Activated T-helper 2 cell treated with anti-CD3 and anti-CD28 coated beads, Interferon-gamma antibody, Interleukin-2, Interleukin-4, amounts not matched to agents 10 μg/mL and 5 μg/mL and 100 μg/mL, durations not matched to agents 14 hours and 24 hours and 36 hours (primary cell): ENCODE measurements at regions of chr3 and their contacts with region 1.

Region 1: GRCh38 chr3:43998836-43999727 is 242.6 kb upstream of the TOPAZ1 start:
- DNase-seq: no peak
- H3K4me3 Mint-ChIP-seq: no peak overlapping the region
- H3K27ac Mint-ChIP-seq: no peak overlapping the region
- H3K4me1 Mint-ChIP-seq: peaks cover 28% of the 10 kb centered on the region
- H3K27me3 Mint-ChIP-seq: peaks cover 75% of the 10 kb centered on the region

Region 2: DNA sequence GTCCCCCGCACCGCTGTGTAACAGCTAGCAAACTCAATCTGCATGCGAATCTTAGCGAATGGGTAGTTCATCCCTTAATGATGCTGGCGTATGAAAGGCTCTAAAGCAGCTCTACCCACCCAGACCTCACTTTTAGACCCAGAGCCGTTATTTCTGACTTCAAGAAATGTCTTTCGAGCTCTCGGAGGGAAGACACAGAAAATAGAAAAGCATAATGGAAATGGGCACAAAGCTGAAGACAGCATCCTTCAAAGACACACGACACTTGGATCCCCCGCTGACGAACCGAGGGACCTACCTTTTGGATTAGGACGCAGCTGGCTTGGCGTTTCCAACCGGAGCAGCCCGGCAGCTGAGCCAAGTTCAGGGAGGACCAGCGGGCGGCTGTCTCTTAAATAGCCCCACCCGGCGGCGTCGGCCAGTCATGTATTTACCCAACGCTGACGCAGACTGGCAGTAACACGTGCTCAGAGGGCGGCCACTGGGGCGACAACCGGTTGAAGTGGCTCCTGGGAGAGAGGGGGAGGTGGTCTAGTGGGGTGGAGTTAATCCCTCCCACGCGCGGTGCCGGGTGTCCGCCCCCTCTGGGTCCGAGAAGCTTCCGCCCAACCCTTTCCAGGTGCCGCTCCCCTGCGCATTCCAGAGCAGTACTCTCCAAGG is 1734.6 kb before region 1 on chr3:
- intact Hi-C with region 1: loop called (anchors 10 kb)
- DNase-seq: no peak
- H3K4me3 Mint-ChIP-seq: no peak overlapping the region
- H3K27ac Mint-ChIP-seq: no peak overlapping the region
- H3K4me1 Mint-ChIP-seq: peaks cover 1% of the 10 kb centered on the region
- H3K27me3 Mint-ChIP-seq: peaks cover 67% of the 10 kb centered on the region

Region 3: DNA sequence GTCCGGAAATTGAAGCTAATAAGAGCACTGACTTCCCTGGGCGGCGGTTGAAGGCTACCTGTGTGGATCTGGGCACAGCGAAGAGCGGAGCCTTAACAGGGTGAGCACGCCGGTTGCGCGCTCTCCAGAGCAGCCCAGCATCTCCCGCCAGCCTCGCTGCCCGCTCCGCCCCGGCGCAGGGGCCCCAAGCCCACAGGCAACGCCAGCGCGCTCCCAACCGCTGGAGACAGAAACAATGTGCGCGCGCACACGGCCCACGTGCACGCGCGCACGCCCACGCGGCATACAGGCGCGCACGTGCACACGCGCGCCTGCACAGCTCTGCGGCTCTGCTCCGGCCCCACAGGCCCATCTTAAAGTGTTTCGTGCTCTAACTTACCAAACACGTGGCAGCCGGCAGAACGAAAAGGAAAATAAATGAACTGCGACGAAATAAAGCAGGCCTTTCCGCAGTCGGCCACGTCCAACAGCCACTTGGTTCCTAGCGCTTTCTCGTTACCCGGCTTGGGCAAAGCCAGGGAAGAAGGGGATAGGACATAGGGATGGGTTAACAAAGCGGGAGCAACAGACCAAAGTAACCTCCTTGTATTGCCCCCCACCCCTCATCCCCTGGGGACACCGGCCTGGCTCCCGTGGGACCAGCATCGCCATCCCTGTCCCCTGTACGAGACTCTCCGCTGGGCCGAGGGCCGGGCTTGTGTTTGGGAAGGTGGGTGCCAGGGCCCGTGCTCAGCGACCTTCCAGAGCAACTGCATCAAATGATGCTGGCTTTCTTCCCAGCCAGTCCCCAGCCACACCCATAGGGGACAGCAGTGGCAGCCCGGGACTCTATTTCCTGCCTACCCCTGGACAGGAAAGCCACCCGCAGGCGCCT is 104.7 kb before region 1 on chr3:
- intact Hi-C with region 1: loop called (anchors 5 kb)
- DNase-seq: peak; percentile 9
- H3K4me3 Mint-ChIP-seq: peak overlapping the region; percentile 68
- H3K27ac Mint-ChIP-seq: no peak overlapping the region
- H3K4me1 Mint-ChIP-seq: peaks cover 3% of the 10 kb centered on the region
- H3K27me3 Mint-ChIP-seq: peaks cover 48% of the 10 kb centered on the region

Region 4: GRCh38 chr3:44021651-44022594 is 22.8 kb after region 1 on chr3:
- intact Hi-C with region 1: loop called (anchors 2 kb)
- DNase-seq: no peak
- H3K4me3 Mint-ChIP-seq: no peak overlapping the region
- H3K27ac Mint-ChIP-seq: no peak overlapping the region
- H3K4me1 Mint-ChIP-seq: peaks cover 6% of the 10 kb centered on the region
- H3K27me3 Mint-ChIP-seq: peaks cover 67% of the 10 kb centered on the region

Region 5: DNA sequence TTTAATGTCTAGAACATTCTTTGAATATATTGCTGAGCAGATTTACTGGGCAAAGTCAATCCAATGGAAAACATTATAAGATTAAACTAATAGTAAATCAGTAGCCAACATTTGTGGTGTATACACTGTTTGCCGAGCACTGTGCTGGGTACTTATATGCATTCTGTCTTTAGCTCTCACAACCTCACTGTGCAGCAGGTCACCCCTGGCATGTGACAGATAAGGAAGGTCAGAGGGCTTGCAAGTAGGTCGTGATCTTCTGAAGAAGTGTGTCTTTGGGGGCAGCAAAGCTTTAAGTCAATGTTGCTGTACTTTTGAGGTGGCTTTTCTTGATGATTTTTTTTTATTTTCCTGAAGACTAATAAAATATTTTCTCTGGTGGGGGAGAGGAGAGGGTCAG is 401.7 kb after region 1 on chr3:
- intact Hi-C with region 1: no loop called
- DNase-seq: no peak
- H3K4me3 Mint-ChIP-seq: no peak overlapping the region
- H3K27ac Mint-ChIP-seq: no peak overlapping the region
- H3K4me1 Mint-ChIP-seq: no peaks in the 10 kb centered on the region
- H3K27me3 Mint-ChIP-seq: no peaks in the 10 kb centered on the region